CD8-positive, alpha-beta memory T cell (primary cell): ENCODE measurements at regions of chr17 and their contacts with region 1.

Region 1: DNA sequence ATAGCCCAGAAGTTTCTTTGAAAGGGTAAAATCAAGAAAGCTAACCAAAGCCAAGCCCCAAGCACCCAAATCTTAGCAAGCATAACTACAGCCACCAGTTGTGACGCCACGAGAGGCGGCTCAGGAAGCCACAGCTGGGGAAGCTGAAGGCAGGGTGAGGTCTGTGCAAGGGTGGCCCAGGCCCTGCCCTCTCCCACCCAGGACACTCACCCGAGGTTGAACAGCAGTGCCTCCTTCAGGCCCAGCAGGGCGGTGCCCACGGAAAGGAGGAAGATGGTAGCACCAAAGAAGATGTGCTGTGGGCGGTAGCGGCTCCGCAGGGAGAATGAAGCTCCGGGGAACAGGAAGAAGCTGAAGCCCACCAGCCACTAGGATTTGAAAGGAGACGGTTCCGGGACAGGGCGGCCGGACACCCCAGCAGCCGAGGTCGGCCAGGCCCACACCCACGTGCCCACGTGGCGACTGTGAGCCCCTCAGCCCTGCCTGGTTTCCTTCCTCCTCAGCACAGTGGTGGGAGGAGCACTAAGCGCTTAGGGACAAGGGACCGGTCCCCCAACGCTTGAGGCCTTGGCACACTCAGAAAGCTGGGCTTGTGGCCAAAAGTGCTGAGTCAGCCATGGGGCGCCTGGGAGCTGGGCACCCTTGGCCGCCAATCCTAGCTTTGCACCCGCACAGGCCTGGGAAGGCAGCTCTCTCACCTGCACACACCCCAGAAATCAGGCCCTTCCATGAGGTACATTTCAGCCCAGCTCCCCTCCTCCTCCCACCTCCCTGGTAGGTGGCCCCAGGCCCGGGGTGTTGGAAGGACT is 11.0 kb downstream of the CYB561 start:
- DNase-seq: peak; percentile 33 to 86 (median 58)
- H3K4me3 ChIP-seq: no peak overlapping the region
- H3K4me3 Mint-ChIP-seq: peak overlapping the region; percentile 38 to 81 (median 68)
- H3K27ac ChIP-seq: peak overlapping the region; percentile 38
- H3K27ac Mint-ChIP-seq: peak overlapping the region; percentile 81 to 98 (median 94)
- H3K4me1 ChIP-seq: peaks cover 43% of the 10 kb centered on the region
- H3K4me1 Mint-ChIP-seq: peaks cover 32 to 77% (median 39%) of the 10 kb centered on the region in 3 donors
- H3K27me3 ChIP-seq: no peaks in the 10 kb centered on the region
- H3K27me3 Mint-ChIP-seq: no peaks in the 10 kb centered on the region

Region 2: DNA sequence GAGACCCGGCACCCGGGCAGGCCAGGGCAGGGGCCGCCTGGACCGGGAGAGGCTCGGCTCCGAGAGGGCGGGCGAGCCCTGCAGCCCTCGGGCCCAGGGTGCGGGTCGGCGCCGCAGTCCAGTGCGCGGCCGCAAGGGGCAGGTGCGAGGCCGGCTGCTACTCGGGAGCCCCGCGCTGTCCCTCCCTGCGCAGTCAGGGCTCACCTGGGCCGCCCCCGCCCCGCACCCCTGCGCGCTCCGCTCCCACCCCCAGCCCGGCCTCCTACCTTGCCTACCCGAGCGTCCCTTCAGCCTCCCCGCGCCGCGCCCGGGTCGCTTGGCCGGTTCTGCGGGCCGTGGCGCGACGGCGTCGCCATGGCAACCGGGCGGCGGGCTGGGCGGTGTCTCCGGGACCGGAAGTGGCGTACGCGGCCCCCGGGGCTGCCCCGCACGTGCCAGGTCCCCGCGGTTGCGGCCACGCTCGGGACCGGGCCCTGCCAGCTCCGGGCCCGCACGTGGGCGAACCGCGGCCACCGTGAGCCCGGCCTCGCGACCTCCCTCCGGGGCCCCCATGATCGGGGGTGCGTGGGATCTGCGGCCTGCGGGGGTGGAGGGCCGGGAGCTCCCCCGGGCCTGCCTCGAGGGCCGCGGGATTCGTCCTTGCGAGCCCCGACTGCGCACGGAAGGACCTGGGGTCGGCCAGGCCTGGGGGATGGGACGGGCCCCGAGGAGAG is 11.1 kb after region 1 on chr17 and contains the start of gene CYB561:
- CTCF ChIA-PET with region 1: interaction called, 24 read pairs
- POLR2A ChIA-PET with region 1: interaction called, 17 read pairs
- DNase-seq: peak; percentile 59 to 86 (median 75)
- H3K4me3 ChIP-seq: peak within 1 kb of the TSS; percentile 65
- H3K4me3 Mint-ChIP-seq: peak within 1 kb of the TSS; percentile 82 to 98 (median 84)
- H3K27ac ChIP-seq: peak within 1 kb of the TSS; percentile 87
- H3K27ac Mint-ChIP-seq: peak within 1 kb of the TSS; percentile 90 to 99 (median 96)
- H3K4me1 ChIP-seq: peaks cover 20% of the 10 kb centered on the region
- H3K4me1 Mint-ChIP-seq: peaks cover 24 to 61% (median 36%) of the 10 kb centered on the region in 3 donors
- H3K27me3 ChIP-seq: no peaks in the 10 kb centered on the region
- H3K27me3 Mint-ChIP-seq: peaks cover 0 to 4% of the 10 kb centered on the region in 2 donors
- total RNA-seq, gene CYB561: 14.3 to 16.6 TPM